Sigmoid colon (tissue), 7 donors: ENCODE measurements at regions of chr19 and their contacts with region 1.

Region 1: GRCh38 chr19:18700501-18701249 is 17.2 kb downstream of the CRTC1 start:
- DNase-seq: peak; percentile 92
- H3K4me3 ChIP-seq: peak overlapping the region; percentile 2 to 53 (median 40)
- H3K27ac ChIP-seq: peak overlapping the region; percentile 72 to 87 (median 81)
- H3K4me1 ChIP-seq: peaks cover 0 to 35% (median 24%) of the 10 kb centered on the region in 4 donors
- H3K27me3 ChIP-seq: no peaks in the 10 kb centered on the region
- CTCF ChIP-seq: no peak
- EP300 ChIP-seq: no peak
- POLR2A ChIP-seq: no peak

Region 2: GRCh38 chr19:18649371-18650020 is 51.2 kb before region 1 on chr19:
- intact Hi-C with region 1: no loop called
- DNase-seq: peak; percentile 90
- H3K4me3 ChIP-seq: peak overlapping the region; percentile 4 to 27 (median 19)
- H3K27ac ChIP-seq: peak overlapping the region; percentile 81 to 89 (median 86)
- H3K4me1 ChIP-seq: peaks cover 0 to 58% (median 56%) of the 10 kb centered on the region in 4 donors
- H3K27me3 ChIP-seq: no peaks in the 10 kb centered on the region
- CTCF ChIP-seq: no peak
- EP300 ChIP-seq: no peak
- POLR2A ChIP-seq: no peak

Region 3: DNA sequence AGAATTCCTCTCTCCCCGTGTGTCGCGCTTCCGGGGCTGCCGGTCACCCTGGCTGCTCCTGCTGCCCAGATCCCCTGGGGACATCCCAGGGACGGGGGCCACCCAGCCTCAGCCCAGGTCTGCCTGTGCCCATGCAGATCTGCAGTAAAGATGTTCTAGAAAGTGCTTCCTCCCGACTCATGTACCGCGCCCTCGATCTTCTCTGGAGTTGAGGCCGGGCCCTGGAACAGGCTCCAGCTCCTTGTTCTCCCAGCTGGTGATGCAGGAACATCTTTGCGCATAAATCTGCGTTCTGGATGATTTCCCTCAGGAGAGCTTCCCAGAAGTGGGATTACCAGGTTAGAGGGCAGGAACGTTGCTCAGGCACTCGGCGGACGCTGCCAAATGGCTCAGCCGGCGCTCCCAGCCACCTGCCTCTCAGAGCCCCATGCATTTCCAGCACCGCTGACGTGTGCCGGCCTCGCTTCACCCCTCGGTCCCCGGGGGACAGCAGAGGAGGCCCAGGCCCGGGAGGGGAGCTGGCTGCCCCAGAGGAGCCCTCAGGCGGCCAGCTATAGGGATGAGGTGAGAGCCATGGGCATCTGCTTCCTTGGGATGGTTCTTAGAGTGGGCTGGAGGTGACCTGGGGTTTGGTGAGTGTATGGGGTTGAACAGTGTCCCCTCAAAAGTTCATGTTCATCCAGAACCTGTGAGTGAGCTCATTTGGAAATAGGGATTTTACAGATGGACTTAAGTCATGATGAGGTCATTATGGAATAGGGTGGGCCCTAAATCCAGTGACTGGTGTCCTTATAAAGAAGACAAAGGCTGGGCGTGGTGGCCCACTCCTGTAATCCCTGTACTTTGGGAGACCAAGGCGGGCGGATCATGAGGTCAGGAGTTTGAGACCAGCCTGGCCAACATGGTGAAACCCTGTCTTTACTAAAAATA is 25.4 kb after region 1 on chr19:
- intact Hi-C with region 1: no loop called
- DNase-seq: no peak
- H3K4me3 ChIP-seq: no peak overlapping the region
- H3K27ac ChIP-seq: peak overlapping the region in 1 of 4 donors; percentile 33
- H3K4me1 ChIP-seq: no peaks in the 10 kb centered on the region
- H3K27me3 ChIP-seq: no peaks in the 10 kb centered on the region
- CTCF ChIP-seq: no peak
- EP300 ChIP-seq: no peak
- POLR2A ChIP-seq: no peak

Region 4: GRCh38 chr19:18762125-18763023 is 61.7 kb after region 1 on chr19:
- intact Hi-C with region 1: loop called (anchors 5 kb)
- DNase-seq: peak; percentile 87
- H3K4me3 ChIP-seq: peak overlapping the region in 3 of 4 donors; percentile 4 to 24 (median 14)
- H3K27ac ChIP-seq: peak overlapping the region; percentile 59 to 78 (median 68)
- H3K4me1 ChIP-seq: peaks cover 0 to 25% (median 24%) of the 10 kb centered on the region in 4 donors
- H3K27me3 ChIP-seq: no peaks in the 10 kb centered on the region
- CTCF ChIP-seq: no peak
- EP300 ChIP-seq: no peak
- POLR2A ChIP-seq: no peak

Region 5: GRCh38 chr19:18856385-18857126 is 155.9 kb after region 1 on chr19:
- intact Hi-C with region 1: no loop called
- DNase-seq: no peak
- H3K4me3 ChIP-seq: no peak overlapping the region
- H3K27ac ChIP-seq: no peak overlapping the region
- H3K4me1 ChIP-seq: peaks cover 0 to 10% (median 0%) of the 10 kb centered on the region in 4 donors
- H3K27me3 ChIP-seq: no peaks in the 10 kb centered on the region
- CTCF ChIP-seq: no peak
- EP300 ChIP-seq: no peak
- POLR2A ChIP-seq: no peak